Ovary (tissue), 10 donors: ENCODE measurements at regions of chr1 and their contacts with region 1.

Region 1: DNA sequence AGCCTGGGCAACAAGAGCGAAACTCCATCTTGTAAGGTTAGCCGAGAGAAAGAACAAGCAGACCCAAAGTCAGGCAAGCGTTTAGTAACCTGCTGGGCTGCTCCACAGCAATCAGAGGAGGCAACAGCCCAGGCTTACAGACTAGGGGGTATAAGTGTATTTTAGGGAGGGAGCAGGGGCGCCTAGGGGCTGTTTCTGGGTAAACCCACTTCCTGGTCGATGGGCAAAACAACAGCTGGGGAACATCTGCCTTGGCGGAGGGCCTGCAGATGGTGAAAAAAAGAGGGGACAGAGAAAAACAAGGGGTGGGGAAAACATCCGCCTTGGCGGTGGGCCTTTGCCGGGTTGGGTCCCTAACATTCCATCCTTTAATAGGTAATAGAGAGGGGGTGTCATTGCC is 5.2 kb downstream of the TAS1R1 start:
- DNase-seq: peak in 1 of 5 donors; percentile 61
- H3K4me3 ChIP-seq: no peak overlapping the region
- H3K27ac ChIP-seq: no peak overlapping the region
- H3K4me1 ChIP-seq: peaks cover 2% of the 10 kb centered on the region
- H3K27me3 ChIP-seq: no peaks in the 10 kb centered on the region
- CTCF ChIP-seq: no peak
- EP300 ChIP-seq: no peak
- POLR2A ChIP-seq: no peak

Region 2: DNA sequence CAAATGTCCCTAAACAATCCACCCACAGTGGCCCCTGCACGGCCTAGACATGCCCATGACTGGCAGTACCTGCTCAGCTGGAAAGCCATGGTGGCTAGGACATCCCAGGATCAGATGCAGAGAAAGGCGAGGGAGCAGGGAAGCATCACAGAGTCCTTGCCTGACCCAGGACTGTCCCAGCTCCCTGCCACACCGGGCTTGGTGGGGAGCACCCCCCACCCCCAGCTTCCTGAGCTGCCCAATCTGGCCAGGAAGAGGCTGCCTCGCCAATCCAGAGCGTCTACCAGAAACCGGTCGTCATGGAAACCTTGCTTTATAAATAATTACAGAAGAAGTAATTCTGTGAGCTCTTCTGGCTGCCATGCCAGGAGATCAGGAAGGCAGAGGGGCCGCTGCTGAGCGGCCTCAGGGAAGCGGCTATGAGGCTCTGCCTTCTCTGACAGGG is 201.5 kb before region 1 on chr1:
- intact Hi-C with region 1: no loop called
- DNase-seq: peak; percentile 34 to 69 (median 60)
- H3K4me3 ChIP-seq: no peak overlapping the region
- H3K27ac ChIP-seq: peak overlapping the region; percentile 35 to 79
- H3K4me1 ChIP-seq: peaks cover 18% of the 10 kb centered on the region
- H3K27me3 ChIP-seq: no peaks in the 10 kb centered on the region
- CTCF ChIP-seq: no peak
- EP300 ChIP-seq: no peak
- POLR2A ChIP-seq: no peak

Region 3: DNA sequence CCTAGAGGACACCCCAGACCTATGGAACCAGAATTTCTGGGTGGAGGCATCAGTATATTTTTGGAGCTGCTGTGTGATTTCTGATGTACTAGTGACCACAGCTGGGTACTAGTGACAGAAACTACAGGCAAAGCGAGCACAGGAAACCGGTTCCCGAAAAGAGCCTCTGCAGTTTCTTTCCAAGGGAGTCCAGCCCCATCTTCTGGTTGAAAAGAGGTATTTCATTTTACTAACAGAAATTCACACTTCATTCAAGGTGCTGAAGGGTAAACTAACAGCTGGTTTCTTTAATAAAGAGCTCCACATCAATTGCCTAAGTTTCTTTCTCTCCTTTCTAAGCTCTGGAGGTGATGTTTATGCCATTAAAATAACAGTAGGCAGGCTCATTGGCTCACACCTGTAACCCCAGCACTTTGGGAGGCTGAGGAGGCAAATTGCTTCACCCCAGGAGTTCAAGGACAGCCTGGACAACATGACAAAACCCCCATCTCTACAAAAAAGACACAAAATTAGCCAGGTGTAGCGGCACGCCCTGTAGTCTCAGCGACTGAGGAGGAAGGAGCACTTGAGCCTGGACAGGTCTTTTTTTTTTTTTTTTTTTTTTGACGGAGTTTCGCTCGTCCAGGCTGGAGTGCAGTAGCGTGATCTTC is 86.4 kb after region 1 on chr1:
- intact Hi-C with region 1: loop called in 1 of 4 experiments (anchors 10 kb)
- DNase-seq: peak in 1 of 5 donors; percentile 40
- H3K4me3 ChIP-seq: no peak overlapping the region
- H3K27ac ChIP-seq: no peak overlapping the region
- H3K4me1 ChIP-seq: no peaks in the 10 kb centered on the region
- H3K27me3 ChIP-seq: no peaks in the 10 kb centered on the region
- CTCF ChIP-seq: peak; percentile 26 to 68 (median 50)
- EP300 ChIP-seq: no peak
- POLR2A ChIP-seq: no peak